CD8-positive, alpha-beta T cell (primary cell): ENCODE measurements at regions of chr5 and their contacts with region 1.

Region 1: GRCh38 chr5:97162045-97162444 is 19.6 kb upstream of the LIX1 start:
- DNase-seq: peak in 7 of 9 experiments; percentile 21 to 79 (median 54)
- ATAC-seq: peak; percentile 58
- H3K4me3 ChIP-seq: no peak overlapping the region
- H3K4me3 Mint-ChIP-seq: no peak overlapping the region
- H3K27ac ChIP-seq: no peak overlapping the region
- H3K27ac Mint-ChIP-seq: no peak overlapping the region
- H3K4me1 ChIP-seq: no peaks in the 10 kb centered on the region
- H3K4me1 Mint-ChIP-seq: peaks cover 10% of the 10 kb centered on the region
- H3K27me3 ChIP-seq: no peaks in the 10 kb centered on the region
- H3K27me3 Mint-ChIP-seq: no peaks in the 10 kb centered on the region
- CTCF ChIP-seq: peak; percentile 93

Region 2: GRCh38 chr5:96344678-96345577 is 817.1 kb before region 1 on chr5:
- CTCF ChIA-PET with region 1: interaction called, 5 read pairs
- POLR2A ChIA-PET with region 1: no interaction called
- intact Hi-C with region 1: loop called in 1 of 2 experiments (anchors 10 kb)
- DNase-seq: peak in 3 of 9 experiments; percentile 8 to 75 (median 70)
- ATAC-seq: peak; percentile 89
- H3K4me3 ChIP-seq: no peak overlapping the region
- H3K4me3 Mint-ChIP-seq: peak overlapping the region; percentile 2
- H3K27ac ChIP-seq: no peak overlapping the region
- H3K27ac Mint-ChIP-seq: no peak overlapping the region
- H3K4me1 ChIP-seq: peaks cover 12% of the 10 kb centered on the region
- H3K4me1 Mint-ChIP-seq: peaks cover 13% of the 10 kb centered on the region
- H3K27me3 ChIP-seq: peaks cover 0 to 2% of the 10 kb centered on the region in 2 experiments
- H3K27me3 Mint-ChIP-seq: peaks cover 4% of the 10 kb centered on the region
- CTCF ChIP-seq: peak; percentile 26

Region 3: GRCh38 chr5:96619946-96620345 is 542.1 kb before region 1 on chr5:
- CTCF ChIA-PET with region 1: interaction called, 26 read pairs
- POLR2A ChIA-PET with region 1: no interaction called
- intact Hi-C with region 1: loop called in 1 of 2 experiments (anchors 2 kb)
- DNase-seq: no peak
- ATAC-seq: no peak
- H3K4me3 ChIP-seq: no peak overlapping the region
- H3K4me3 Mint-ChIP-seq: no peak overlapping the region
- H3K27ac ChIP-seq: no peak overlapping the region
- H3K27ac Mint-ChIP-seq: no peak overlapping the region
- H3K4me1 ChIP-seq: no peaks in the 10 kb centered on the region
- H3K4me1 Mint-ChIP-seq: no peaks in the 10 kb centered on the region
- H3K27me3 ChIP-seq: no peaks in the 10 kb centered on the region
- H3K27me3 Mint-ChIP-seq: no peaks in the 10 kb centered on the region
- CTCF ChIP-seq: no peak

Region 4: GRCh38 chr5:96752341-96753016 is 409.6 kb before region 1 on chr5:
- CTCF ChIA-PET with region 1: interaction called, 54 read pairs
- POLR2A ChIA-PET with region 1: no interaction called
- intact Hi-C with region 1: loop called (anchors 1 kb)
- DNase-seq: peak in 4 of 9 experiments; percentile 14 to 82 (median 65)
- ATAC-seq: peak; percentile 44
- H3K4me3 ChIP-seq: no peak overlapping the region
- H3K4me3 Mint-ChIP-seq: no peak overlapping the region
- H3K27ac ChIP-seq: no peak overlapping the region
- H3K27ac Mint-ChIP-seq: no peak overlapping the region
- H3K4me1 ChIP-seq: no peaks in the 10 kb centered on the region
- H3K4me1 Mint-ChIP-seq: no peaks in the 10 kb centered on the region
- H3K27me3 ChIP-seq: no peaks in the 10 kb centered on the region
- H3K27me3 Mint-ChIP-seq: no peaks in the 10 kb centered on the region
- CTCF ChIP-seq: peak; percentile 75

Region 5: GRCh38 chr5:96790961-96791504 is 371.0 kb before region 1 on chr5:
- CTCF ChIA-PET with region 1: interaction called, 11 read pairs
- POLR2A ChIA-PET with region 1: no interaction called
- intact Hi-C with region 1: no loop called
- DNase-seq: no peak
- ATAC-seq: no peak
- H3K4me3 ChIP-seq: no peak overlapping the region
- H3K4me3 Mint-ChIP-seq: no peak overlapping the region
- H3K27ac ChIP-seq: no peak overlapping the region
- H3K27ac Mint-ChIP-seq: peak overlapping the region; percentile 41
- H3K4me1 ChIP-seq: peaks cover 22% of the 10 kb centered on the region
- H3K4me1 Mint-ChIP-seq: peaks cover 39% of the 10 kb centered on the region
- H3K27me3 ChIP-seq: no peaks in the 10 kb centered on the region
- H3K27me3 Mint-ChIP-seq: no peaks in the 10 kb centered on the region
- CTCF ChIP-seq: no peak

Region 6: GRCh38 chr5:96997265-96997859 is 164.7 kb before region 1 on chr5:
- CTCF ChIA-PET with region 1: interaction called, 8 read pairs
- POLR2A ChIA-PET with region 1: no interaction called
- intact Hi-C with region 1: loop called in 1 of 2 experiments (anchors 5 kb)
- DNase-seq: peak in 4 of 9 experiments; percentile 19 to 62 (median 35)
- ATAC-seq: peak; percentile 77
- H3K4me3 ChIP-seq: no peak overlapping the region
- H3K4me3 Mint-ChIP-seq: no peak overlapping the region
- H3K27ac ChIP-seq: no peak overlapping the region
- H3K27ac Mint-ChIP-seq: peak overlapping the region; percentile 17
- H3K4me1 ChIP-seq: no peaks in the 10 kb centered on the region
- H3K4me1 Mint-ChIP-seq: peaks cover 42% of the 10 kb centered on the region
- H3K27me3 ChIP-seq: no peaks in the 10 kb centered on the region
- H3K27me3 Mint-ChIP-seq: no peaks in the 10 kb centered on the region
- CTCF ChIP-seq: peak; percentile 73